A549 (cell line): ENCODE measurements at regions of chr11 and their contacts with region 1.

Region 1: GRCh38 chr11:34174412-34175041 is 69.1 kb downstream of the NAT10 start:
- DNase-seq: peak; percentile 75 to 80
- ATAC-seq: peak; percentile 98 to 99
- H3K4me3 ChIP-seq: peak overlapping the region; percentile 32
- H3K27ac ChIP-seq: peak overlapping the region; percentile 66 to 82
- H3K4me1 ChIP-seq: peaks cover 25% of the 10 kb centered on the region
- CTCF ChIP-seq: peak; percentile 93
- EP300 ChIP-seq: no peak
- POLR2A ChIP-seq: no peak
- RAD21 ChIP-seq: peak; percentile 98 to 100

Region 2: DNA sequence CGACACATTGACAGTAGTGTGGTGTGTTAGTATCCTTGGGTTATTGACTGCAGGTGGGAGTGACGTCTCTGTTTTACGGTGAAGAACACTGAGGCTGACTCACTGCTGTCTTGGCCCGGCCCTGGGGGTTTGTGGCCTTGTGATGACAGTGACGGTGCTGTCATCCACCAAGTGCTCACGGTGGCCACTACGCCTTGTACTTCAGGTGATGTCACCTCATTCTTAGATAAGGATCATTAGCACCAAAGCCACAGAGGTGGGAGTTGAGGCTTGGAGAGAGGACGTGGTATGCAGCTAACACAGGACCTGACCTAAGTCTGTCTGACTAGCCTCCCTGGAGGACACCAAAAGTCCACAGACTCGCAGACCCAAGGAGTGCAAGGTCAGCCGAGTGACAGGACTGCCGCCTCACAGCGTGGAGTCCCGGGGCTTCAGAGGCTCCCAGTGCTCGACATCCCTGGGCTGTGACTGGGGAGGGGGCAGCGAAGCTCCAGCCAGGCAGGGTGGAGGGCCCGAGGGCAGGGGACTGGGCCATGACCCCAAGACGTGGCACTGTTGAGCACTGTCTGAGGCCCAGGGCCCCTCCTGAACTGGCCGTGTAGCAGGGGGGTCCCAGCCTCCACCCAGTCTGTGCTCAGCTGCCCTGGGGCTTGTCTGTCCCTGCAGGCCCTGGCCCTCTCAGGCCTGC is 12.6 kb before region 1 on chr11:
- CTCF ChIA-PET with region 1: interaction called, 41 read pairs
- POLR2A ChIA-PET with region 1: no interaction called
- DNase-seq: no peak
- ATAC-seq: peak in 1 of 2 experiments; percentile 4; a peak in 3 of 6 replicates
- H3K4me3 ChIP-seq: no peak overlapping the region
- H3K27ac ChIP-seq: no peak overlapping the region
- H3K4me1 ChIP-seq: no peaks in the 10 kb centered on the region
- CTCF ChIP-seq: no peak
- EP300 ChIP-seq: no peak
- POLR2A ChIP-seq: no peak
- RAD21 ChIP-seq: no peak

Region 3: DNA sequence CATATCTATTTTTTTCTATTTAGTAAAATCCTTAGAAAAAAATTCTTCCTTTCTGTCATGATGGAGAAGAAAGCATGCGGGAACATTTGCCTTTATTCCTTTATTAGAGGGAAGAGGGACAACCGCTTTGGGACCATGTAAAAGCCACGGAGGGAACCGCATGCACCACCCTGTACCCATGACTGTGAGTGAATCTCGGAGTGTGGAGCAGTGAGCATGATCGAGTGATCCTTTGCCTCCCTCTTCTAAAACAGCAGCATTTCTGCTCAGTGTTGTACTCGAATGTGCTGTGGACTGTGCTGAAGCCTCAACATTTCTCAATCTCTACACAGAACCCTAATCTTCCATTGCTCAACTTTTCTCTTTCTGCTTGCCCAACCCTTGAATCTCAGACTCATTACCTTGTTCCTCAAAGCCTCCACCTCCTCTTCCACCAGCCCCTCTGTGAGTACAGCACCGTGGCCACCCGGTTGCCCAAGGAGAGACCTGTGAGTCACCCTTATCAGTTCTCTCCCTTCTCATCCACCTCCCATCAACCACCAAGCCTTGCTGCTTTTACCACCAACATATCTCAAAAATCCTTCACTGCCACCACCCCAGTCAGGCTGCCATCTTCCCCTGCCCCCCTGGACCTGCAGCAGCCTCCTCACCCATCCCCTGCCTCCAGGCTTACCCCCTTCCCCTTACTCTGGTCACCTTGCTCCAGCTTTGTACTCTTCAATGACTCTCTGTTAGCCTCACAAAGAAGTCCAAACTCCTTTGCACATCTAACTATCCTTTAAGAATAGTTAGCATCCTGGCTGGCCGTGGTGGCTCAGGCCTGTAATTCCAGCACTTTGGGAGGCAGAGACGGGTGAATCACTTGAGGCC is 34.0 kb after region 1 on chr11:
- CTCF ChIA-PET with region 1: interaction called, 23 read pairs
- POLR2A ChIA-PET with region 1: interaction called, 7 read pairs
- DNase-seq: peak; percentile 44 to 50
- ATAC-seq: peak; percentile 42 to 49; a peak in 4 of 6 replicates
- H3K4me3 ChIP-seq: no peak overlapping the region
- H3K27ac ChIP-seq: peak overlapping the region; percentile 40 to 72; a peak in 5 of 6 replicates
- H3K4me1 ChIP-seq: peaks cover 77% of the 10 kb centered on the region
- CTCF ChIP-seq: no peak
- EP300 ChIP-seq: no peak
- POLR2A ChIP-seq: no peak
- RAD21 ChIP-seq: no peak

Region 4: DNA sequence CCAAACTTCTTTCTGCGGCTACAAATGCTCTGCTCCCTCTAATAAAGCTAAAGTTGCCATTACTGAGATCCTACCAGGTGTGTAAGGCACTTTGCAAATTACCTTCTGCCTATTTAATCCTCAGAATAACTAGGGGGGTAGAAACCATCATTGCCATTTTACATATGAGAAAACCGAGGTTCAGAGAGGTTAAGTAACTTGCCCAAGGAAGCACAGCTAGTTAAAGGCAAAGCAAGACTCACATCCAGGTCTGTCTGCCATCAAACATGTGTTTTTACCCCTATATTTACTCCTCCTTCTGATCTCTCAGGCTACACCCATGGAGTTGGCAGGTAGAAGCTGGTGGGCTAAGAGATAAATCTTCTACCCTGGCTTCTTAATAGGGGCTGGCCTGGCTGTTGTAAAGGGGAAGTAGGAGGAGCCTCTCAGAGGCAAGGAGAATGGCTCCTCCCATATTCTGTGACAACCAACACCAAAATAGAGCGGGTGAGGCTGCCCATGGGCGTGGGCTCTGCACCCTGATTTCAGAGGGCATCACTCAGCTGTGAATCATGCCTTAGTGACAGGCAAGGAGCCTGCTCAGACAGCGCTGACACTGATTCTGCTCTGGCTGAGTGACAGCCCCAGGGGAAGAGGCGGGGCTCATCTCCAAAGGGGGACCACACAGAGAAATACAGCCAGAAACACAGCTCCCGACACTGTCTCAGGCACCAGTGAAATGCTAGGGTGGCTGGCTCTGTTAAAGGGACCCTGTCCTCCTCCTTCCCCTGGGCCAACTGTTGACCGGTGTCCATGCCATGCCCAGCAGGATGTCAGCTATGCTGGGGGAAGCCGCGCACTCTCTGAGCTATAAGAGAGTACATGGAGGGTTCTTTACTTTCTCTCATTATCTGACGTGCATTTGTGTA is 76.5 kb after region 1 on chr11:
- CTCF ChIA-PET with region 1: interaction called, 27 read pairs
- POLR2A ChIA-PET with region 1: no interaction called
- DNase-seq: peak; percentile 69 to 71
- ATAC-seq: peak; percentile 86 to 87
- H3K4me3 ChIP-seq: no peak overlapping the region
- H3K27ac ChIP-seq: peak overlapping the region in 1 of 2 experiments; percentile 39; a peak in 3 of 6 replicates
- H3K4me1 ChIP-seq: peaks cover 63% of the 10 kb centered on the region
- CTCF ChIP-seq: no peak
- EP300 ChIP-seq: no peak
- POLR2A ChIP-seq: no peak
- RAD21 ChIP-seq: no peak; a peak in 1 of 5 replicates

Region 5: GRCh38 chr11:34302046-34302921 is 127.8 kb after region 1 on chr11:
- CTCF ChIA-PET with region 1: interaction called, 13 read pairs
- POLR2A ChIA-PET with region 1: no interaction called
- DNase-seq: no peak
- ATAC-seq: peak in 1 of 2 experiments; percentile 62; a peak in 3 of 6 replicates
- H3K4me3 ChIP-seq: no peak overlapping the region
- H3K27ac ChIP-seq: peak overlapping the region in 1 of 2 experiments; percentile 44; a peak in 3 of 6 replicates
- H3K4me1 ChIP-seq: peaks cover 23% of the 10 kb centered on the region
- CTCF ChIP-seq: no peak
- EP300 ChIP-seq: no peak
- POLR2A ChIP-seq: no peak
- RAD21 ChIP-seq: no peak

Region 6: DNA sequence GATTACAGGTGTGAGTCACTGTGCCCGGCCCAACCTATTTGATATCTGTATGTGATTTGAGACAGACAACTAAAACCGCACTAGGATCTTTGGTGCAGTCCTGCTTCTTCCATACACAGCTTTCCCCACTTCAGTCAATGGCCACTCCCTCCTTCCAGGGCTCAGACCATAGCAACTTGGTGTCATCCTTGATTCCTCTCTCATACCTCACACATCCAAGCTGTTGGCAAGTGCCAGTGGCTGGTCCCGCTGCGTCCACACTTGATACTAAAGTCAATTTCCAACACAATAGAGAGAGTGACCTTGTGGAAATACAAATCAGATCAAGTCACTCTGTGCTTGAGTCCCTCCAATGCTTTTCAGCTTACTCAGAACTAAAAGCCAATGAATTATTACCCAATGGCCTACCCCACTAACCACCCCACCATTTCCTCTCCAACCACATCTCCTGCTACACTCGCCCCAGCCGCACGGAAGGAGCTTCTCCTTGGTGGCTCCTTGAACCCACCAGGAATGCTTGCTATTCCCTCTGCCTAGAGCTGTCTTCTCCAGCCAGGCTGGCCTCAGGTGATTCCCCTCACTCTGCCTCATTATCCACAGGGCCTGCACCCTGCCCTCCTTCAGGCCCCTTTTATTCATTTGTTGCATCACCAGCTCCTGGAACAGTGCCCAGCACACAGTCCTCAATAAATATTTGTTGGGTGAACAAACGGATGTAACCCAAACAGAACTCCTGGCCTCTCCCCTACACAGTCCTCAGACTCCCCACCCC is 170.4 kb after region 1 on chr11:
- CTCF ChIA-PET with region 1: interaction called, 113 read pairs
- POLR2A ChIA-PET with region 1: interaction called, 7 read pairs
- DNase-seq: peak; percentile 67 to 90
- ATAC-seq: peak; percentile 75
- H3K4me3 ChIP-seq: peak overlapping the region; percentile 9; the same call in 1 of the 3 replicates
- H3K27ac ChIP-seq: peak overlapping the region; percentile 88 to 89
- H3K4me1 ChIP-seq: peaks cover 100% of the 10 kb centered on the region
- CTCF ChIP-seq: no peak
- EP300 ChIP-seq: peak; percentile 71 to 83; a peak in 4 of 5 replicates
- POLR2A ChIP-seq: no peak
- RAD21 ChIP-seq: peak in 1 of 2 experiments; percentile 15; a peak in 3 of 5 replicates